Psoas muscle (tissue), 8 donors: ENCODE measurements at regions of chr6 and their contacts with region 1.

Region 1: DNA sequence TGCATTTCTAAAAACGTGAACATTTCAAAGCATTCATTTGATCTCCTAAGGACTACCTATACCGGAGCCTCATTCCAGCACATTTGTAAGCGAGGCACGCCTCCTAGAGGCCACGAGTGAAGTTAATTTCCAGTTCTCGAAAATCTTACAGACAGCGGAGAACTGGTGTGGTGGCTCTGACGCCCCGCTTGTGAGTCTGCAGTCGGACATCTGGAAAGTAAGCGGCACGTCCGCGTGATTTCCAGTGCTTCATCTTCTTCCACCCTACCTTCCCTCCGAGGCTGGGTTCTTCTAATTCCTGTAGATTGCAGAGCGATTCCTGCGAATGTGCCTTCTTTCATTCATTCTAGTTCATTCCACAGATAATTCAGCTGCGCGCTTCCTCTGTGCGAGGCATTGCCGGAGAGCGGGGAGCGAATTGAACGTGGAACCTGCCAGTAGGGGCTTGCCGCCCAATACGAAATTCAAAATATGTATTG is 810 bp upstream of the PRIM2 start:
- DNase-seq: peak; percentile 78 to 85
- ATAC-seq: peak; percentile 88 to 93 (median 89)
- H3K4me3 ChIP-seq: peak overlapping the region; percentile 64
- H3K27ac ChIP-seq: peak overlapping the region; percentile 20
- H3K4me1 ChIP-seq: no peaks in the 10 kb centered on the region
- H3K27me3 ChIP-seq: no peaks in the 10 kb centered on the region
- CTCF ChIP-seq: peak; percentile 80

Region 2: DNA sequence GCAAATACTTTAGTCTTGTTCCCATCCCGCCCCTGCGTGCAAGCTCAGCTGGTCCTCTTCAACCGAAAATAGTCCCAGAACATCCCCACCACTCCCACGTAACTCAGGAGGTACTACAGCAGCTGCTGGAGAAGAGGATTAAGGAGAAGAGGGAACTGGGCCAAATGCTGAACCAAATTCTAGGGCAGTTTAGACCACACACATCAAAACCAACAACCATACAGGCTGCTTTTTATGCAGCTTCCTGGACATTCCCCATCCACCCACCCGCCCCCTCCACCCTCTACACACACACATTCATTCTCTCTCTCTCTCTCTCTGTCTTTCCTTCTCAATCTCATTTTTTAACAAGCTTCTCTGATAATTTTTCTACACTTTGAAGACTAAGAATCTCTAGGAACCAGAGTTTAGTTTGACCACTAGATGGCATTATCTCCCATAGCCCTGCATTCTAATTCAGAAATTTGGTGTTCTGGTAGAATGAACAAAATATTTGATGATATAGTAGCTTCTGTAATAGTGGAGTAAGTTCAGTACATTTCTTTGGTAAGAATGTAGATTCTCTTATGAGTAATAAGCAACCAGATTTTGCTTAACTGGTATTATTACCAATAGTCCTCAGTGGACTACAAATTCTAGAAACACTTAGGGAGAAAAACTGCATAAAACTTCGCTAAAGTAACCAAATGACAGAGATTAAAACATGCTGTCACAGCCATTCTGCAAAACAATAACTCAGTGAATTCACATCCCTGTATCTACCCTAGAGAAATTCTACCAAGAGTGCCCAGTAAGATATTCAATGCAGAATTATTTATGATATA is 413.8 kb before region 1 on chr6:
- intact Hi-C with region 1: loop called (anchors 2 to 5 kb)
- DNase-seq: no peak
- ATAC-seq: peak in 2 of 4 donors; percentile 42 to 56
- H3K4me3 ChIP-seq: peak overlapping the region; percentile 2
- H3K27ac ChIP-seq: no peak overlapping the region
- H3K4me1 ChIP-seq: no peaks in the 10 kb centered on the region
- H3K27me3 ChIP-seq: no peaks in the 10 kb centered on the region
- CTCF ChIP-seq: peak; percentile 72

Region 3: GRCh38 chr6:57040009-57040408 is 276.6 kb before region 1 on chr6:
- intact Hi-C with region 1: loop called in 1 of 2 experiments (anchors 10 kb)
- DNase-seq: no peak
- ATAC-seq: no peak
- H3K4me3 ChIP-seq: no peak overlapping the region
- H3K27ac ChIP-seq: no peak overlapping the region
- H3K4me1 ChIP-seq: no peaks in the 10 kb centered on the region
- H3K27me3 ChIP-seq: no peaks in the 10 kb centered on the region
- CTCF ChIP-seq: no peak

Region 4: DNA sequence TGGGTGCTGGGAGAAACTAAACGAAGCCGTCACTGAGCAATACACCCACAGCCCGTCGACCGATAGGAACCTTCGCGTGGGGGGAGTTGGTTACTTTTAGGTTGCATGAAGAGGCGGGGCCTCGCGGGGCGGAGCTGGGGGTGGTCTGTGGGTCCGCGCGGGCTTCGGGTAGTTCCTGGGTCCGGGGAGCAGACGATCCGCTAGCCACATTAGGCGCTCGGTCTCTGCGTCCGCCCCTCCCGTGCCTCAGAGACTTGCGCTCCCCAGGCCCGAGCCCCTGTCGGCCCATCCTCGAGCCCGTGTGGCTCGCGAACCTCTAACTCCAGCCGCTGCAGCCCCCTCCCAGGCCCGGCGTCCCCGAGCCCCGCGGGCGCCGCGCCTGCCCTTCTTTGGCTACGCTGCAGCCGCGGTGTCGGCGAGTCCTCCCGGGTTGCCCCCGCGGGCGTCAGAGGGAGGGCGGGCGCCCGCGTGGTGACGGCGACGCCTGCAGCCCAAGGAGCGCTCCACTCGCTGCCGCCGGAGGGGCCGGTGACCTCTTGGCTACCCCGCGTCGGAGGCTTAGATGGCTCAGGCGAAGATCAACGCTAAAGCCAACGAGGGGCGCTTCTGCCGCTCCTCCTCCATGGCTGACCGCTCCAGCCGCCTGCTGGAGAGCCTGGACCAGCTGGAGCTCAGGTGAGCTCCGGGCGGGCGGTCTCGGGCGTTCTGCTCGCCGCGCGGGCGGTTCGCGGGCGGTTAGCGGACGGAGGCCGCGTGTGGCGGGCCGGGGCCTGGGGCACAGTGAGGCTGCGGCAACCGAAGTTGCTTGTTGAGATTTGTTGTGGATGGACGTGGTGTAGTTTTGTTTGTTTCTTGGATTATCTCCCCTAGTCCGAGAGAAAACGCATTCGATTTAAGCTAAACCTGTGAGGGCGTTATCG is 144.2 kb before region 1 on chr6 and contains the start of gene BAG2:
- intact Hi-C with region 1: loop called (anchors 5 to 10 kb)
- DNase-seq: peak; percentile 90 to 94
- ATAC-seq: peak; percentile 96 to 98 (median 96)
- H3K4me3 ChIP-seq: peak within 1 kb of the TSS; percentile 89
- H3K27ac ChIP-seq: peak within 1 kb of the TSS; percentile 93
- H3K4me1 ChIP-seq: peaks cover 12% of the 10 kb centered on the region
- H3K27me3 ChIP-seq: no peaks in the 10 kb centered on the region
- CTCF ChIP-seq: peak; percentile 38
- total RNA-seq, gene BAG2: 7.3 to 9.3 (median 8.5) TPM

Region 5: GRCh38 chr6:57190140-57190539 is 126.5 kb before region 1 on chr6:
- intact Hi-C with region 1: loop called in 1 of 2 experiments (anchors 5 kb)
- DNase-seq: no peak
- ATAC-seq: peak in 1 of 4 donors; percentile 50
- H3K4me3 ChIP-seq: no peak overlapping the region
- H3K27ac ChIP-seq: no peak overlapping the region
- H3K4me1 ChIP-seq: no peaks in the 10 kb centered on the region
- H3K27me3 ChIP-seq: no peaks in the 10 kb centered on the region
- CTCF ChIP-seq: peak; percentile 29